GM12878 (cell line): ENCODE measurements at regions of chr11 and their contacts with region 1.

Region 1: GRCh38 chr11:66638177-66639065 is at the start of gene RBM4:
- DNase-seq: peak; percentile 98
- ATAC-seq: peak; percentile 98
- H3K4me3 ChIP-seq: peak within 1 kb of the TSS; percentile 90
- H3K27ac ChIP-seq: peak within 1 kb of the TSS; percentile 92
- H3K4me1 ChIP-seq: peaks cover 17% of the 10 kb centered on the region
- H3K27me3 ChIP-seq: no peaks in the 10 kb centered on the region
- CTCF ChIP-seq: peak in 2 of 3 experiments; percentile 4 to 10; a peak in 1 of 6 replicates
- EP300 ChIP-seq: no peak
- POLR2A ChIP-seq: peak; percentile 93
- RAD21 ChIP-seq: no peak
- polyA plus RNA-seq, gene RBM4: 163 to 224 TPM

Region 2: DNA sequence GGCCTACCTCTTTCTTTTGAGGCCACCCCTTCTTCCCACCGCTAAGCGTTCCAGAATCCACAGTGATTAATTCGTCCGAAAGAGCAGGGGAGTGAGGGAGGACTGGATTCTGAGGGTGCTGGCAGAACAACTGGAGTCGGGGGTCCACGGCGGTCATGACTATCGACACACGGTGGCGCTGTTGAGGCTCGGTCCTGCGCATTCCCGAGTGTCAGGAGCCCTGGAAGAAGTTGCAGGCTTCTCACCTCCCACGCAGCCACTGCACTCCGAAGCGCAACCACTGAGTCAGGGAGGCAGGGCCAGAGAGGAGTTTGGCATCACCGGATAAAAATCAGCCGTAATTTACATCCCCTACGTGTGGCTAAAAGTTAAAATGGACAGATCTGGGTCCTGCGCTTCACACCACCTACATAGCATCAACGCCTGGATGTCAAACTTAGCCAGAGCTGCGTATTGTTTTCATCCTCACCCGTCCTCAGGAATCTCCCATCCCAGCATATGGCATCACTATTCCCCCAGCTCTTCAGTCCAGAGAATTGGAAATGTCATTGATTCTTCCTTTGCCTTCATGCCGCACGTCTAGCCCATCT is 59.3 kb before region 1 on chr11:
- CTCF ChIA-PET with region 1: interaction called, 11 read pairs
- POLR2A ChIA-PET with region 1: interaction called, 4 read pairs
- RAD21 ChIA-PET with region 1: interaction called, 4 read pairs
- SMC1A ChIA-PET with region 1: interaction called, 4 read pairs
- in situ Hi-C with region 1: no loop called
- intact Hi-C with region 1: no loop called
- DNase-seq: no peak
- ATAC-seq: peak; percentile 91
- H3K4me3 ChIP-seq: no peak overlapping the region
- H3K27ac ChIP-seq: no peak overlapping the region
- H3K4me1 ChIP-seq: no peaks in the 10 kb centered on the region; the same call in 1 of the 2 replicates
- H3K27me3 ChIP-seq: no peaks in the 10 kb centered on the region
- CTCF ChIP-seq: peak; percentile 77 to 78 (median 77)
- EP300 ChIP-seq: no peak
- POLR2A ChIP-seq: no peak
- RAD21 ChIP-seq: peak; percentile 69

Region 3: DNA sequence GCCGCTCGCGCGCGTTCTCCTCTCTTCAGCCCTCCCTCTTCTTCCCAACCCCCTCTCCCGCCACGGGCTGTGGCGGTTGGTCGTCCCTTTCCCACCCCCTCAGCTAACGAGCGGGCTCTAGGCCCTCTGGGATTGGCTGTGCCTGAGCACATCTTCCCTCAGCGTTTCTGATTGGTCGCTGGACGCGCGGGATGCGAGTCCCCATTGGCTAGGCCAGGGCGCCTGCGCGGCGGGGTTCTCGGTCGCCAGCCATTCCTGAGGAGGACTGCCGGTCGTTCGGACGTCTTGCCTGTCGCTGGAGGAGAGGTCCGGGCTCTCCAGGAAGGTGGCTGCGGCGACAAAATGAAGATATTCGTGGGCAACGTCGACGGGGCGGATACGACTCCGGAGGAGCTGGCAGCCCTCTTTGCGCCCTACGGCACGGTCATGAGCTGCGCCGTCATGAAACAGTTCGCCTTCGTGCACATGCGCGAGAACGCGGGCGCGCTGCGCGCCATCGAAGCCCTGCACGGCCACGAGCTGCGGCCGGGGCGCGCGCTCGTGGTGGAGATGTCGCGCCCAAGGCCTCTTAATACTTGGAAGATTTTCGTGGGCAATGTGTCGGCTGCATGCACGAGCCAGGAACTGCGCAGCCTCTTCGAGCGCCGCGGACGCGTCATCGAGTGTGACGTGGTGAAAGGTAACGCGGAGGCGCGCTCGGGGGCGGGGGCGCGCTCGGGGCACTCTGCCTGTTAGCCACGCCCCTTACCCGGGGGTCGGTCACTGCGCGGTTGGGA is 21.9 kb before region 1 on chr11 and contains the start of gene RBM14:
- CTCF ChIA-PET with region 1: interaction called, 71 read pairs
- POLR2A ChIA-PET with region 1: interaction called, 105 read pairs
- RAD21 ChIA-PET with region 1: interaction called, 25 read pairs
- SMC1A ChIA-PET with region 1: interaction called, 21 read pairs
- in situ Hi-C with region 1: no loop called
- intact Hi-C with region 1: no loop called
- DNase-seq: peak; percentile 97
- ATAC-seq: peak; percentile 95
- H3K4me3 ChIP-seq: peak within 1 kb of the TSS; percentile 90
- H3K27ac ChIP-seq: peak within 1 kb of the TSS; percentile 93
- H3K4me1 ChIP-seq: peaks cover 5% of the 10 kb centered on the region; the same call in 1 of the 2 replicates
- H3K27me3 ChIP-seq: no peaks in the 10 kb centered on the region
- CTCF ChIP-seq: no peak
- EP300 ChIP-seq: peak in 1 of 2 experiments; percentile 28; a peak in 1 of 4 replicates
- POLR2A ChIP-seq: peak; percentile 100
- RAD21 ChIP-seq: no peak
- polyA plus RNA-seq, gene RBM14: 5.4 to 16.1 TPM

Region 4: DNA sequence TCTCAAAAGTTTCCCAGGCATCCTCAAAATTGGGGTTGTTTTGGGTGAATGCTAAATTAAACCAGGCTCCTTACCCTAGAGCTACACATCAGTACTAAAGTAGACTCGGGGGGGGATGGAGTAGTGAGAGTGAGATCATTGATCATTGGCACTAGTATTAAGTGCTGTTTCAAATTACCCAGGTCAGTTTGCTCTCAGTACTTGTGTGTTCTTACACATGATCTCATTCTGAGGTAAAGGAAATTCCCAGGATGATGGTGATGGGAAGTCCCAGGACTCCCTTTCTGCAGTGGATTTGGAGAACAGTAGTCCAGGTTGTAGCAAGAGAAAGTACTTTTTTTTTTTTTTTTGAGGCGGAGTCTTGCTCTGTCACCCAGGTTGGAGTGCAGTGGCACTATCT is 12.6 kb after region 1 on chr11:
- CTCF ChIA-PET with region 1: interaction called, 6 read pairs
- POLR2A ChIA-PET with region 1: interaction called, 12 read pairs
- RAD21 ChIA-PET with region 1: interaction called, 4 read pairs
- SMC1A ChIA-PET with region 1: interaction called, 13 read pairs
- in situ Hi-C with region 1: no loop called
- intact Hi-C with region 1: no loop called
- DNase-seq: no peak
- ATAC-seq: peak; percentile 64
- H3K4me3 ChIP-seq: no peak overlapping the region
- H3K27ac ChIP-seq: no peak overlapping the region
- H3K4me1 ChIP-seq: no peaks in the 10 kb centered on the region
- H3K27me3 ChIP-seq: no peaks in the 10 kb centered on the region
- CTCF ChIP-seq: no peak
- EP300 ChIP-seq: no peak
- POLR2A ChIP-seq: peak; percentile 20; the same call in 1 of the 2 replicates
- RAD21 ChIP-seq: no peak

Region 5: GRCh38 chr11:66762088-66762487 is 123.7 kb after region 1 on chr11:
- CTCF ChIA-PET with region 1: no interaction called
- POLR2A ChIA-PET with region 1: no interaction called
- RAD21 ChIA-PET with region 1: no interaction called
- SMC1A ChIA-PET with region 1: no interaction called
- in situ Hi-C with region 1: no loop called
- intact Hi-C with region 1: no loop called
- DNase-seq: no peak
- ATAC-seq: no peak
- H3K4me3 ChIP-seq: no peak overlapping the region
- H3K27ac ChIP-seq: no peak overlapping the region
- H3K4me1 ChIP-seq: no peaks in the 10 kb centered on the region
- H3K27me3 ChIP-seq: no peaks in the 10 kb centered on the region
- CTCF ChIP-seq: no peak
- EP300 ChIP-seq: no peak
- POLR2A ChIP-seq: no peak
- RAD21 ChIP-seq: no peak